GM10248 (cell line): ENCODE measurements at regions of chr15 and their contacts with region 1.

Region 1: DNA sequence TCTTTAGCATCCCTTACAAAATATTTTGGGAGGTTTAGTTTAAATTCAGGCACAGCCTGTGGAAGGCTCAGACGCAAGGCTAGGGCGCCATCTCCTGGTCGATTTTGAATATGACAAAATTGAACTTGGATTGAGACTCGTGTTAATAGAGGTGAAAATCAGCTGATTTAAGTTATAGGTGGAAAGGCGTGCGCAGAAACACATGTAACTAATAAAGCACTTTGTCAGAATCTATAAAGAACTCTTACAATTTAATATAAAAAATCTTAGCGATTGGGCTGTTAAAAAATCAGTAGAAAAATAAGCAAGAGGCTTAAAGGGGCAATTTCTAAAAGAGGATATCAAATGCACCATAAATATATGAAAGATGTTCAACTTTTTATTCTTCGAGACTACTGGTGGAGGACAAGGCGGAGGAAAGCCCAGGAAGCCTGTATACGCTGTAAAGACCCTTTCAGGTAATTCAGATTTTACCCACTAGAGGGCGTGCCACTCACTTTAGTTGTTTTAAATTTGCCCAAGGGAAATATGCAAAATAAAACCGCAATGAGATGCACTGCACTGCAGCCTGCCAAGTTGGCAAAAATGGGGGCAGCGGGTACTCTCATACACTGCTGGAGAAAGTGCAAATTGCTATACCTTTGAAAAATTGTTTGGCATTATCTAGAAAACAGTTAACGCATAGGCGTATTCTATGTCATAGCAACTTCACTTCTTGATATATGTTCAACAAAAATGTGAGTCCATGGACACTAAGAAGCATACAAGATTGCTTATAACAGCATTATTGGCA is 64.7 kb downstream of the SLC30A4 start:
- DNase-seq: peak; percentile 67
- CTCF ChIP-seq: peak; percentile 72

Region 2: GRCh38 chr15:45198337-45199135 is 259.3 kb before region 1 on chr15:
- CTCF ChIA-PET with region 1: interaction called, 16 read pairs
- POLR2A ChIA-PET with region 1: interaction called, 3 read pairs
- DNase-seq: peak; percentile 90
- CTCF ChIP-seq: peak; percentile 69

Region 3: GRCh38 chr15:45429974-45430792 is 27.7 kb before region 1 on chr15:
- CTCF ChIA-PET with region 1: interaction called, 120 read pairs
- POLR2A ChIA-PET with region 1: no interaction called
- DNase-seq: peak; percentile 90
- CTCF ChIP-seq: peak; percentile 98

Region 4: DNA sequence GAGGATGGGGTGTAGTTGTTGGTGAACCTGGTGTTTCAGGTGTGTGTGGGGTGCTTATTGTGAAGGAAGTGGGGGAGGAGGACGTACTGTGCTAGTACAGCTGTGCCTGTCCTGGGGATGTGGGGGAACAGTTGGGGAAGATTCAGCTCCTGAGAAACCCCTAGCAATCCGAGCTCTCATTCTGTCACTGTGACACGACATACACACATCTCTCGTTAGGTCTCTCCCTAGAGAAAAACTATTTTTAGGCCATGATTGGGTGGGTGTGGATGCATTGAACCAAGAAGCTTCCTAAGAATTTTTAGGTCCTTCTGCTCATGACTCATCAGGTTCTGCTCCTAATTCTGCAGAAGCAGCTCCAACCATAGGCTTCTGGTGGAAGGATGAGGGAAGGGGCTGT is 10.5 kb after region 1 on chr15:
- CTCF ChIA-PET with region 1: interaction called, 18 read pairs
- POLR2A ChIA-PET with region 1: no interaction called
- DNase-seq: no peak
- CTCF ChIP-seq: no peak

Region 5: GRCh38 chr15:45611305-45611704 is 153.5 kb after region 1 on chr15:
- CTCF ChIA-PET with region 1: interaction called, 101 read pairs
- POLR2A ChIA-PET with region 1: interaction called, 4 read pairs
- DNase-seq: peak; percentile 32
- CTCF ChIP-seq: peak; percentile 36